Activated CD4-positive, alpha-beta T cell treated with anti-CD3 and anti-CD28 coated beads for 36 hours (primary cell): ENCODE measurements at regions of chr21 and their contacts with region 1.

Region 1: GRCh38 chr21:39313571-39314142 is at the start of gene BRWD1:
- DNase-seq: peak; percentile 85
- ATAC-seq: peak; percentile 42
- H3K4me3 Mint-ChIP-seq: peak within 1 kb of the TSS; percentile 92
- H3K27ac Mint-ChIP-seq: peak within 1 kb of the TSS; percentile 96
- H3K4me1 Mint-ChIP-seq: peaks cover 39% of the 10 kb centered on the region
- H3K27me3 Mint-ChIP-seq: no peaks in the 10 kb centered on the region
- total RNA-seq, gene BRWD1: 19.1 to 24.5 TPM

Region 2: DNA sequence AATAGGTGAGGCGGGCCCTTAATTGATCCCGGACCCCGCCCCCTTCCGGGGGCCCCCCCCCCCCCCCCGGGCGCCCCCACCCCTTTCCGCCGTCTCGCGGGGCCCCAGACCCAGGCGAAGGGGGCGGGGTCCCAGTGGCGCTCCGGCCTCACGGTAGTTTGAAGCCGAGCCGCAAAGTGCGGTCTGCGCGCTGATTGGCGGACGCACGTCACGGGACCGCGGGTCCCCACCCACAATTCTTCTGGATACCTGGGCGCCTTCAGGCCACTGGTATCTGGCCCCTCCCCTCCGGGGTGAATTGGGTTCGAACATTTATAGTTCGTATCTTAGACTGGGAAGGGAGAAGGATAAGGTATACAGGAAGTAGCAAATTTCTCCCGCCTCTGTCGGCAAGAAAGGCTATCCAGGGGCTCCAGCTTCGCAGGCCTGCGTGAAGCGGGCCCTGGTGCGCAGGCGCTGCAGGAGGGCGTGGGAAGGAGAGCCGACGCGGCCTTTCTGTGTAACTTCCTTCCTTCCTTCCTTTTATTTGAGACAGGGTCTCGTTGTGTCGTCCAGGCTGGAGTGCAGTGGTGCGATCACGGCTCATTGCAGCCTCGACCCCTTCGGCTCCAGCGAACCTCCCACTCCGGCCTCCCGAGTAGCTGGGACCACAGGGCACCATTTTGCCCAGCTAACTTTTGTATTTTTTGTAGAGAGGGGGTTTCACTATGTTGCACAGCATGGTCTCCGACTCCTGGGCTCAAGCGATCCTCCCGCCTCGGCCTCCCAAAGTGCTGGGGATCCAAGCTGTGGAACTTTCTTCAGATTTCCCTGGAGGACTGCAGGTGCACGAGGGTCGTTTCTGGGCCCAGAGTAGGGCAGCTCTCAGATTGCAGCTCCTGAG is 35.8 kb after region 1 on chr21:
- CTCF ChIA-PET with region 1: interaction called, 4 read pairs
- POLR2A ChIA-PET with region 1: interaction called, 19 read pairs
- intact Hi-C with region 1: loop called (anchors 1 kb)
- DNase-seq: peak; percentile 99
- ATAC-seq: peak; percentile 89
- H3K4me3 Mint-ChIP-seq: peak overlapping the region; percentile 92
- H3K27ac Mint-ChIP-seq: peak overlapping the region; percentile 100
- H3K4me1 Mint-ChIP-seq: peaks cover 33% of the 10 kb centered on the region
- H3K27me3 Mint-ChIP-seq: no peaks in the 10 kb centered on the region

Region 3: DNA sequence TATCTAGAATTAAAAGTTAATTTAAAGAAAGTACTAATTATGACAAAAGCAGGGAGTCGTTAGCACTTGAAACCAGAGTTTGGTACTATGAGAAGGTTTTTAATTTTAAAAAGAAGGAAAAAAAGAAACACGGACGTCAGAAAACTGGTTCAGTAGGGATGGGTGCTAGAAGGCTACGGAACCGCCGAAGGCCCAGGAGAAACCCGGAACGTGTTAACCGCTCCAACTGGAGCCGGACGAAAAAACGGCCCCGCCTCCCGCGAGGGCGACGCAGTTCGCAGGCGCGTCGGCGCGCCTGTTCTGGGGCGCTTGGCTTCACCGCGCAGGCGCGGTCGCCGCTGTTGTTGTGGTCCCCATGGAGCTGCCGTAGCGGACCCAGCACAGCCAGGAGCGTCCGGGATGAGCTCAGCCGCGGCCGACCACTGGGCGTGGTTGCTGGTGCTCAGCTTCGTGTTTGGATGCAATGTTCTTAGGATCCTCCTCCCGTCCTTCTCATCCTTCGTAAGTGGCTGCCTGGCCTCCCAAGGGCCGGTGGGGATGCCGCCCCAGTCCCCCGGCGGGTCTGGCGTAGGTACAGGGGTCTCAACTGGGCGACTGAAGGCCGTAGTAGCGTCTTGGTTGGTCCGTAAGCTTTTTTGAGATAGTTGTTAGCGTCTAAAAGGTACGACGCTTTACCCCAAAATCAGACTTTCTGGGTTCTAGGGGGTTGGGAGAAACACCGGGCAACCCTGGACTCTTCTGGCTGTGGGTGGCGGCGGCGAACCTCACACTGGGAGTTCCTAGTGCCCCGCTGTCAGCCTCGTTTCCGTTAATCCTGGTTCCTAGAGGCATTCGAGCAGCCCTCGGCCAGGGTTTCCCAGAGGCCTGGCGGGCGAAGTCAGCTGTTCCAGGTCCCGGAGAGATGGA is 66.6 kb after region 1 on chr21:
- CTCF ChIA-PET with region 1: no interaction called
- POLR2A ChIA-PET with region 1: interaction called, 8 read pairs
- intact Hi-C with region 1: loop called (anchors 1 to 2 kb)
- DNase-seq: peak; percentile 96
- ATAC-seq: peak; percentile 98
- H3K4me3 Mint-ChIP-seq: peak overlapping the region; percentile 84
- H3K27ac Mint-ChIP-seq: peak overlapping the region; percentile 64
- H3K4me1 Mint-ChIP-seq: peaks cover 23% of the 10 kb centered on the region
- H3K27me3 Mint-ChIP-seq: no peaks in the 10 kb centered on the region

Region 4: GRCh38 chr21:39388038-39388810 is 74.6 kb after region 1 on chr21:
- CTCF ChIA-PET with region 1: interaction called, 6 read pairs
- POLR2A ChIA-PET with region 1: interaction called, 3 read pairs
- intact Hi-C with region 1: loop called (anchors 1 to 2 kb)
- DNase-seq: peak; percentile 95
- ATAC-seq: peak; percentile 83
- H3K4me3 Mint-ChIP-seq: peak overlapping the region; percentile 73
- H3K27ac Mint-ChIP-seq: peak overlapping the region; percentile 89
- H3K4me1 Mint-ChIP-seq: peaks cover 25% of the 10 kb centered on the region
- H3K27me3 Mint-ChIP-seq: no peaks in the 10 kb centered on the region

Region 5: GRCh38 chr21:39885119-39885848 is 571.6 kb after region 1 on chr21:
- CTCF ChIA-PET with region 1: no interaction called
- POLR2A ChIA-PET with region 1: interaction called, 13 read pairs
- intact Hi-C with region 1: no loop called
- DNase-seq: no peak
- ATAC-seq: no peak
- H3K4me3 Mint-ChIP-seq: no peak overlapping the region
- H3K27ac Mint-ChIP-seq: no peak overlapping the region
- H3K4me1 Mint-ChIP-seq: no peaks in the 10 kb centered on the region
- H3K27me3 Mint-ChIP-seq: peaks cover 2% of the 10 kb centered on the region